ENCODE measurements at regions of chr3 and their contacts with region 1.

Region 1: GRCh38 chr3:42581709-42582473 is at the start of gene SEC22C:
- DNase-seq: peak; percentile 98
- ATAC-seq: peak; percentile 92
- H3K4me3 Mint-ChIP-seq: peak within 1 kb of the TSS; percentile 89
- H3K27ac Mint-ChIP-seq: peak within 1 kb of the TSS; percentile 91
- H3K4me1 Mint-ChIP-seq: peaks cover 49% of the 10 kb centered on the region
- H3K27me3 Mint-ChIP-seq: no peaks in the 10 kb centered on the region
- total RNA-seq, gene SEC22C: 46.1 to 47.3 TPM

Region 2: GRCh38 chr3:42557849-42558248 is 24.0 kb before region 1 on chr3:
- CTCF ChIA-PET with region 1: no interaction called
- DNase-seq: peak; percentile 54
- ATAC-seq: no peak
- H3K4me3 Mint-ChIP-seq: no peak overlapping the region
- H3K27ac Mint-ChIP-seq: no peak overlapping the region
- H3K4me1 Mint-ChIP-seq: peaks cover 26% of the 10 kb centered on the region
- H3K27me3 Mint-ChIP-seq: no peaks in the 10 kb centered on the region

Region 3: GRCh38 chr3:42600111-42600988 is 18.5 kb after region 1 on chr3 and contains the start of gene NKTR:
- CTCF ChIA-PET with region 1: interaction called, 26 read pairs
- DNase-seq: peak; percentile 100
- ATAC-seq: peak; percentile 89
- H3K4me3 Mint-ChIP-seq: peak within 1 kb of the TSS; percentile 87
- H3K27ac Mint-ChIP-seq: peak within 1 kb of the TSS; percentile 99
- H3K4me1 Mint-ChIP-seq: peaks cover 25% of the 10 kb centered on the region
- H3K27me3 Mint-ChIP-seq: no peaks in the 10 kb centered on the region
- total RNA-seq, gene NKTR: 76.0 to 120 TPM

Region 4: GRCh38 chr3:42746455-42747450 is 164.9 kb after region 1 on chr3:
- CTCF ChIA-PET with region 1: interaction called, 14 read pairs
- DNase-seq: peak; percentile 29
- ATAC-seq: no peak
- H3K4me3 Mint-ChIP-seq: no peak overlapping the region
- H3K27ac Mint-ChIP-seq: no peak overlapping the region
- H3K4me1 Mint-ChIP-seq: peaks cover 14% of the 10 kb centered on the region
- H3K27me3 Mint-ChIP-seq: no peaks in the 10 kb centered on the region

Measured in activated CD8-positive, alpha-beta memory T cell treated with anti-CD3 and anti-CD28 coated beads, Interleukin-2, amount 10 ng/mL, durations not matched to agents 7 days and 5 days (primary cell).